ENCODE measurements at regions of chr14 and their contacts with region 1.

Region 1: GRCh38 chr14:25574628-25575325 is 524.8 kb upstream of the STXBP6 start:
- DNase-seq: no peak
- ATAC-seq: no peak
- H3K4me3 ChIP-seq: no peak overlapping the region
- H3K27ac ChIP-seq: no peak overlapping the region
- H3K4me1 ChIP-seq: no peaks in the 10 kb centered on the region
- H3K27me3 ChIP-seq: no peaks in the 10 kb centered on the region
- CTCF ChIP-seq: no peak
- POLR2A ChIP-seq: no peak
- RAD21 ChIP-seq: no peak

Region 2: GRCh38 chr14:25615174-25615573 is 40.4 kb after region 1 on chr14:
- CTCF ChIA-PET with region 1: no interaction called
- POLR2A ChIA-PET with region 1: no interaction called
- dilution Hi-C with region 1: no loop called
- in situ Hi-C with region 1: no loop called
- intact Hi-C with region 1: loop called (anchors 2 kb)
- DNase-seq: no peak
- ATAC-seq: no peak
- H3K4me3 ChIP-seq: no peak overlapping the region
- H3K27ac ChIP-seq: no peak overlapping the region
- H3K4me1 ChIP-seq: no peaks in the 10 kb centered on the region
- H3K27me3 ChIP-seq: no peaks in the 10 kb centered on the region
- CTCF ChIP-seq: no peak
- POLR2A ChIP-seq: no peak
- RAD21 ChIP-seq: no peak

Measured in IMR-90 (cell line).